Lower leg skin (tissue), 4 donors: ENCODE measurements at regions of chr3 and their contacts with region 1.

Region 1: GRCh38 chr3:53594276-53594675 is 99.9 kb downstream of the CACNA1D start:
- DNase-seq: no peak
- H3K4me3 ChIP-seq: no peak overlapping the region
- CTCF ChIP-seq: no peak
- POLR2A ChIP-seq: no peak

Region 2: GRCh38 chr3:51955893-51956770 is 1638.1 kb before region 1 on chr3:
- intact Hi-C with region 1: loop called (anchors 5 kb)
- DNase-seq: peak in 1 of 2 donors; percentile 85
- H3K4me3 ChIP-seq: peak overlapping the region; percentile 8
- CTCF ChIP-seq: no peak
- POLR2A ChIP-seq: no peak

Region 3: DNA sequence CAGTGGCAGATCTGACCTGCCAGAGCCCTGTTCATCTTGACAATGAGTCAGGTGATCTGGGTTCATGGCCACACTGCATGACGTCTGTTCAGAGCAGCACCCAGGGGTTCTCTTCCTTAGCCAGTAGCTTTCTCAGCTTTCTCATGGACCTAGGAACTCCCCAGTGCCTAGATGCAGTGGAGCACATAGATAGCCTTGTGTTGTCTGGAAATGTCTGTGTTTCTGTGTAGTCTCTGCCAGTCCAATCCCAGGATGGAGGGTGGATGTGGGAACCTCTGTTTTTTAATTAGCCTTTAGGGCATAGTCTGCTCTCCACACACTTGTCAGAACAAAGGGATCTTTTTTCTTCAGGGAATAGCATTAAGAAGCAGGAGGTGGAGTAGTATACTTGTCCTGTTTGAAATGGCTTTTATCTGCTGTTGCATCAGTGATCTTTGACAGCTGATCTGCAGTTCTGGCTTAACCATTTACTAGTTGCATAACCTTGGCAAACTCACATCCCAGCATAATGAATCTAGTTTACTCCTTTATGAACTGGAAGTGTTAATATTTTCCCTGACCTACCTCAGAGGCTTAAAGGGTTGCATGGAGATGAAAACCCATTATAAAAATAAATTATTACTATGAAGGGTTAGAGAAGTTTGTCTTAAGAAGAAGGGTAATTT is 116.0 kb before region 1 on chr3:
- intact Hi-C with region 1: no loop called
- DNase-seq: no peak
- H3K4me3 ChIP-seq: no peak overlapping the region
- CTCF ChIP-seq: no peak
- POLR2A ChIP-seq: no peak

Region 4: GRCh38 chr3:53489386-53489785 is 104.9 kb before region 1 on chr3:
- intact Hi-C with region 1: no loop called
- DNase-seq: no peak
- H3K4me3 ChIP-seq: no peak overlapping the region
- CTCF ChIP-seq: no peak
- POLR2A ChIP-seq: no peak